ENCODE measurements at regions of chr16 and their contacts with region 1.

Region 1: GRCh38 chr16:9099131-9099625 is 7.7 kb downstream of the HAPSTR1 start:
- DNase-seq: no peak
- H3K4me3 ChIP-seq: no peak overlapping the region
- H3K27ac ChIP-seq: no peak overlapping the region
- H3K4me1 ChIP-seq: peaks cover 24% of the 10 kb centered on the region
- H3K27me3 ChIP-seq: no peaks in the 10 kb centered on the region
- CTCF ChIP-seq: no peak
- POLR2A ChIP-seq: no peak

Region 2: GRCh38 chr16:8788578-8789172 is 310.5 kb before region 1 on chr16:
- intact Hi-C with region 1: no loop called
- DNase-seq: no peak
- H3K4me3 ChIP-seq: no peak overlapping the region
- H3K27ac ChIP-seq: no peak overlapping the region
- H3K4me1 ChIP-seq: no peaks in the 10 kb centered on the region
- H3K27me3 ChIP-seq: no peaks in the 10 kb centered on the region
- CTCF ChIP-seq: no peak
- POLR2A ChIP-seq: no peak

Region 3: GRCh38 chr16:8828541-8829165 is 270.5 kb before region 1 on chr16:
- intact Hi-C with region 1: no loop called
- DNase-seq: no peak
- H3K4me3 ChIP-seq: no peak overlapping the region
- H3K27ac ChIP-seq: no peak overlapping the region
- H3K4me1 ChIP-seq: no peaks in the 10 kb centered on the region
- H3K27me3 ChIP-seq: no peaks in the 10 kb centered on the region
- CTCF ChIP-seq: no peak
- POLR2A ChIP-seq: no peak

Region 4: DNA sequence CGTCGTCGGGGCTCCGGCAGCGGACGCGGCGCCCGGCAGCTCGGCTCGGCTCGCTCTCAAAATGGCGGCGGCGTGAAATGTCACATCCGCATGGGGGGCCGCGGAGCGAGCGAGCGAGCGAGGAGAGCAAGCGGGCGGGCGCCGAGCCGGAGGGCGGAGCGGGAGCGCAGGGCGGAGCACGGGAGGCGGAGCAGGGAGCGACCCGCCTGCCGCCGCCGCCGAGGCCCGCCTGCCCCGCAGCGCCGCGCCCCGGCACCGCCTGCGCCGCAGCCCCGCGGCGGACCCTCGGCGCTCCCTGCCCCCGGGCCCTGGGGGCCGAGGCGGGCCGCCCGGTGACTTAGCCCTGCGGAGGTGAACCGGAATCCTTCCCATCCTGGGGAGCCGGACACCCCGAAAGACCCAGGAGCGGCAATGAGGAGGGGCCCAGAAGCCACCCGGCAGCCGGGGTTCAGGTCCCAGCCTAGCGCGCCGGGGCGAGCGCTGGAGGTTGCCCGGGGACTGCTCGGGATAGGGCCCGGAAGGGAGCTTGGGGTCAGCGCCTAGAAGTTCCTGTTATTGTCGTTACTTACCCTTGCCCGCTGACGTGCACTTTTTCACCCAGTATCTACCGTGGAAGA is 135.2 kb before region 1 on chr16 and contains the start of gene USP7:
- intact Hi-C with region 1: loop called (anchors 5 kb)
- DNase-seq: peak; percentile 86
- H3K4me3 ChIP-seq: peak within 1 kb of the TSS; percentile 71 to 73
- H3K27ac ChIP-seq: peak within 1 kb of the TSS; percentile 72 to 73
- H3K4me1 ChIP-seq: peaks cover 7% of the 10 kb centered on the region
- H3K27me3 ChIP-seq: no peaks in the 10 kb centered on the region
- CTCF ChIP-seq: no peak
- POLR2A ChIP-seq: peak; percentile 55
- total RNA-seq, gene USP7: 60.2 to 84.9 TPM

Measured in prostate gland (tissue), 2 donors.